Natural killer cell (primary cell): ENCODE measurements at regions of chr18 and their contacts with region 1.

Region 1: DNA sequence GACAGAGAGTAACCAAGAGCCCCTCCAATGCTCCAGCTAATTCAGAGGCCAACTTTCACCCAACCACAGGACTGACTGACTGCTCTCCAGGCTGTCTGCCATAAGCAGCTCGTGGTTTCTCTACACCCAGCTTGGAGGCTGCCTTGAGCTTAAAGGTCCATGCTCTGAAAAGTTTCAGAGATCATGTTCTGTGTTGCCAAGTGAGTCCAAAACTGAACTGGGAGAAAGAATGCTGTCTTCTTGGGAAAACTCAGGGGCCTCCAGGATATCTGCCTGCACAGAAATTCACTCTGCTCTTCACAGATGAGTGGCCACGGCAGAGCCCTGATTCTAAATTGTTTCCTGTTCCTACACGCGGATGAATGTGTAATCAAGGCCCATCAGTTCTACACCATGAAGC is 51.1 kb downstream of the LPIN2 start:
- DNase-seq: peak in 1 of 2 donors; percentile 54
- ATAC-seq: peak in 2 of 3 donors; percentile 14 to 18
- H3K4me3 ChIP-seq: no peak overlapping the region
- H3K4me3 Mint-ChIP-seq: peak overlapping the region; percentile 89
- H3K27ac ChIP-seq: peak overlapping the region; percentile 91
- H3K27ac Mint-ChIP-seq: peak overlapping the region; percentile 98 to 99
- H3K4me1 ChIP-seq: peaks cover 62% of the 10 kb centered on the region
- H3K4me1 Mint-ChIP-seq: peaks cover 69 to 78% of the 10 kb centered on the region in 2 donors
- H3K27me3 ChIP-seq: no peaks in the 10 kb centered on the region
- H3K27me3 Mint-ChIP-seq: no peaks in the 10 kb centered on the region
- CTCF ChIP-seq: no peak

Region 2: GRCh38 chr18:2559249-2559648 is 402.6 kb before region 1 on chr18:
- intact Hi-C with region 1: no loop called
- DNase-seq: no peak
- ATAC-seq: no peak
- H3K4me3 ChIP-seq: no peak overlapping the region
- H3K4me3 Mint-ChIP-seq: no peak overlapping the region
- H3K27ac ChIP-seq: no peak overlapping the region
- H3K27ac Mint-ChIP-seq: no peak overlapping the region
- H3K4me1 ChIP-seq: no peaks in the 10 kb centered on the region
- H3K4me1 Mint-ChIP-seq: peaks cover 0 to 6% of the 10 kb centered on the region in 2 donors
- H3K27me3 ChIP-seq: no peaks in the 10 kb centered on the region
- H3K27me3 Mint-ChIP-seq: no peaks in the 10 kb centered on the region
- CTCF ChIP-seq: no peak

Region 3: DNA sequence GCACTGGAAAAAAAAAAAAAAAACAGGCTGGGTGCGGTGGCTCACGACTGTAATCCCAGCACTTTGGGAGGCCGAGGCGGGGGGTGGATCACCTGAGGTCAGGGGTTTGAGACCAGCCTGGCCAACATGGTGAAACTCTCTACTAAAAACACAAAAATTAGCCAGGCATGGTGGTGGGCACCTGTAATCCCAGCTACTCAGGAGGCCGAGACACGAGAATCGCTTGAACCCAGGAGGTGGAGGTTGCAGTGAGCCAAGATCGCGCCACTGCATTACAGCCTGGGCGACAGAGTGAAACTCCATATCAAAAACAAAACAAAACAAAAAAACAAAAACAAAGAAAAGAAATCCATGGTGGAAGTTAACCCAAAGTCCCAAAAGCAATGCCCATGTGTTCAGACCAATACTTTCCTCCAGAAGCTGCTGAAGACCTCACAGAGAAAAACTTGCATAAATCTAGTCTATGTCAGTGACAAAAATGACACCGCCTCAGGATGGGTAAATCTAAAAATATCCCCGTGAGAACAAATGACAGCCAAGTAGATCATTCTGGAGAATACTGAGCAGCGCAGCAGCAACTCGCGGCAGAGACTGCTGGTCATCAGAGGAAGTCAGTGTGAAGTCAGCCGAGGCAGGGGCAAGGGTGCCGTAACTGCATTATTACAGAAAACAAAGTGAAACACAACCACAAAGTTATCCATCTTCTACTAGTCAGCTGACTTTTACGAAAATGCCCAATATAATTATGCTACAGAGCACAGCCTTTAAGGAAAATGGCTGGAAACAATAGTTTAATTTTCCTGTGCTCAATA is 10.1 kb after region 1 on chr18:
- intact Hi-C with region 1: loop called (anchors 1 kb)
- DNase-seq: peak; percentile 76 to 85
- ATAC-seq: peak; percentile 88 to 94 (median 94)
- H3K4me3 ChIP-seq: peak overlapping the region; percentile 33
- H3K4me3 Mint-ChIP-seq: peak overlapping the region; percentile 90
- H3K27ac ChIP-seq: peak overlapping the region; percentile 96
- H3K27ac Mint-ChIP-seq: peak overlapping the region; percentile 98
- H3K4me1 ChIP-seq: peaks cover 50% of the 10 kb centered on the region
- H3K4me1 Mint-ChIP-seq: peaks cover 76% of the 10 kb centered on the region in 2 donors
- H3K27me3 ChIP-seq: no peaks in the 10 kb centered on the region
- H3K27me3 Mint-ChIP-seq: no peaks in the 10 kb centered on the region
- CTCF ChIP-seq: no peak

Region 4: GRCh38 chr18:2979871-2980790 is 18.3 kb after region 1 on chr18:
- intact Hi-C with region 1: loop called (anchors 1 kb)
- DNase-seq: peak; percentile 35 to 61
- ATAC-seq: peak; percentile 17 to 40 (median 33)
- H3K4me3 ChIP-seq: peak overlapping the region; percentile 29
- H3K4me3 Mint-ChIP-seq: peak overlapping the region; percentile 91
- H3K27ac ChIP-seq: peak overlapping the region; percentile 93
- H3K27ac Mint-ChIP-seq: peak overlapping the region; percentile 95 to 98
- H3K4me1 ChIP-seq: peaks cover 46% of the 10 kb centered on the region
- H3K4me1 Mint-ChIP-seq: peaks cover 85% of the 10 kb centered on the region in 2 donors
- H3K27me3 ChIP-seq: no peaks in the 10 kb centered on the region
- H3K27me3 Mint-ChIP-seq: no peaks in the 10 kb centered on the region
- CTCF ChIP-seq: no peak

Region 5: DNA sequence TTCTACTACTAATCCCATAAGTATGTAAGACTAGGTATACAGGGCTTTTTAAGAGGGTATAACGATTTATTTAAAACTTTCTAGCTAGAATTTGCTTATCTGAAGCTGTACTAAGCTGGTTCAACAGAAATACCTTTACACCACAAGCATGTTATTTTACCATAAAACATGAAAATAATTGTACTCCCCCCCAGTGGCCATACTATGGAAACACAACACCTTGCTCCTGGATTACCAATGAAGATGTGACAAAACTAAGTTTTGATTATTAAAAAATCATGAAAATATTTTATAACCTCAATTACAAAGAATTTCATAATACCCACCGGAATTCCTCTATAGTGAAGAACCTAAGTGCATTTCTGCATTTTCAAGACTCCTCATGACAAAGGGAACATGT is 23.8 kb after region 1 on chr18:
- intact Hi-C with region 1: loop called (anchors 1 kb)
- DNase-seq: peak in 1 of 2 donors; percentile 80
- ATAC-seq: peak; percentile 41 to 54 (median 42)
- H3K4me3 ChIP-seq: no peak overlapping the region
- H3K4me3 Mint-ChIP-seq: no peak overlapping the region
- H3K27ac ChIP-seq: no peak overlapping the region
- H3K27ac Mint-ChIP-seq: peak overlapping the region in 1 of 2 donors; percentile 4
- H3K4me1 ChIP-seq: peaks cover 12% of the 10 kb centered on the region
- H3K4me1 Mint-ChIP-seq: peaks cover 38 to 44% of the 10 kb centered on the region in 2 donors
- H3K27me3 ChIP-seq: no peaks in the 10 kb centered on the region
- H3K27me3 Mint-ChIP-seq: no peaks in the 10 kb centered on the region
- CTCF ChIP-seq: peak; percentile 74

Region 6: DNA sequence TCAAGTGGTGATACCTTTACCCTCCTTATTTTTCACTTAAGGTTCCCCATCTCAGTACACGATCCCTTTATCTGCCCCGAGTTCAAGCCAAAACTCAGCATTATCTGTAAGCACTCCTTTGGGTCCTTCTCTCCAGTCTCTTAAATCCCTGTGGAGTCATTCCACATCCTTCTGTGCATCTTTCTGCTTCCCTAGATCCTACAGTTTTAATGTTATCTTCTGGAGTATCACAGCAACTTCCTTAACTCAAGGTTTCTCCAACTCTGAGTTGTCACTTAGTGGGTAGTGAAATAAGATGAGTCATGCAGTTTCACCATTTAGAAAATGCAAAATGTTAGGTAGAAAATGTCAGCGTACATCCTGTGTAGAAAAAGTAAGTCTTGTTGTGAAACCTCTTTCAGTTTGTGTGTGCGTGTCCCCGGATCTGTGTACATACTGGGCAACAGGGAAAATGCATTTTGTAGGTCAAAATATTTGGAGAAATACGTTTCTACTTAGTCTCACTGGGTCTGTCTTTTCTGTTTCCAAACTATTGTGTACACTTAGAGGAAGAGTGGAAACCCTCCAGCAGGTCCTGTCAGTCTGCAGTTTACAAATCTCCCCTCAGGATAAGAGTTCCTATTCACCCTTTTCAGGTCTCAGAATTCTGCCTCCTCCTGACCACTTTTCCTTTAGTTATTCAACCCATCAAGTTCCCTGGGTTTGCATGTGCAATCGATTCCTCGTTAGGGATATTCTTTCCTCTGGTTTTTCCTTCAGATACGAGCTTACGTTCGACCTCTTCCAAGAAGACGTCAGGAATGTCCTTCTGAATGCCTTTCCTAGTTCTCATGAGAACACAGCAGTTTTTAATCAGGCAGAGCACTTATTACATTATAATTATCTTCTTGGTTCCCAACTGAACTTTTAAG is 642.9 kb after region 1 on chr18:
- intact Hi-C with region 1: loop called (anchors 5 kb)
- DNase-seq: peak in 1 of 2 donors; percentile 72
- ATAC-seq: peak; percentile 70 to 86 (median 75)
- H3K4me3 ChIP-seq: peak overlapping the region; percentile 31
- H3K4me3 Mint-ChIP-seq: no peak overlapping the region
- H3K27ac ChIP-seq: peak overlapping the region; percentile 89
- H3K27ac Mint-ChIP-seq: no peak overlapping the region
- H3K4me1 ChIP-seq: peaks cover 34% of the 10 kb centered on the region
- H3K4me1 Mint-ChIP-seq: no peaks in the 10 kb centered on the region
- H3K27me3 ChIP-seq: no peaks in the 10 kb centered on the region
- H3K27me3 Mint-ChIP-seq: no peaks in the 10 kb centered on the region
- CTCF ChIP-seq: no peak